ENCODE measurements at regions of chrX and their contacts with region 1.

Region 1: GRCh38 chrX:13487731-13488523 is 81.5 kb upstream of the EGFL6 start:
- DNase-seq: peak; percentile 81
- H3K4me3 ChIP-seq: no peak overlapping the region
- H3K27ac ChIP-seq: peak overlapping the region; percentile 90
- H3K4me1 ChIP-seq: peaks cover 13% of the 10 kb centered on the region
- H3K27me3 ChIP-seq: no peaks in the 10 kb centered on the region
- CTCF ChIP-seq: peak in 1 of 2 donors; percentile 15
- POLR2A ChIP-seq: peak; percentile 15

Region 2: DNA sequence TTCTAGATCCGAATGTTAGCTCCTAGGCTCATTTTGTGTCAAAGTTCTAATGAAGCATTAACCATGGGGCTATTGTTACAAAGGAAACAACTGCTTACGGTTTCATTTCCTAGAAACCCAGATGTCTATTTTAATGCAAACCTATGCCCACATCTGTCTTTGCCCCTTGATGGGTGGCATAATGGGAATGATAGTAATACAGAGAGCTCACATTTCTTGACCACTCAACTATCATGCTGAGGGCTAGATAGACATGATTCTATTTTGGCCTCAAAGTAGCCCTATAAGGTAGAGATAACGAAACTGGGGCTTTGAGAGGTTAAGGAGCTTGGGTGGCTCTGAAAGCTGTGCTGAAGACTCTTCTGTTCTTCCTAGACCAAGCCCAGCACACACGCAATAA is 619.2 kb before region 1 on chrX:
- CTCF ChIA-PET with region 1: no interaction called
- POLR2A ChIA-PET with region 1: no interaction called
- dilution Hi-C with region 1: no loop called
- intact Hi-C with region 1: no loop called
- DNase-seq: no peak
- H3K4me3 ChIP-seq: no peak overlapping the region
- H3K27ac ChIP-seq: no peak overlapping the region
- H3K4me1 ChIP-seq: no peaks in the 10 kb centered on the region
- H3K27me3 ChIP-seq: peaks cover 0 to 6% of the 10 kb centered on the region in 2 experiments
- CTCF ChIP-seq: no peak
- POLR2A ChIP-seq: no peak

Region 3: GRCh38 chrX:12946838-12947544 is 540.9 kb before region 1 on chrX:
- CTCF ChIA-PET with region 1: interaction called, 38 read pairs
- POLR2A ChIA-PET with region 1: interaction called, 4 read pairs
- dilution Hi-C with region 1: no loop called
- intact Hi-C with region 1: loop called (anchors 1 kb)
- DNase-seq: peak; percentile 90
- H3K4me3 ChIP-seq: no peak overlapping the region
- H3K27ac ChIP-seq: peak overlapping the region; percentile 64
- H3K4me1 ChIP-seq: peaks cover 27% of the 10 kb centered on the region
- H3K27me3 ChIP-seq: no peaks in the 10 kb centered on the region
- CTCF ChIP-seq: peak; percentile 85 to 87
- POLR2A ChIP-seq: no peak

Region 4: DNA sequence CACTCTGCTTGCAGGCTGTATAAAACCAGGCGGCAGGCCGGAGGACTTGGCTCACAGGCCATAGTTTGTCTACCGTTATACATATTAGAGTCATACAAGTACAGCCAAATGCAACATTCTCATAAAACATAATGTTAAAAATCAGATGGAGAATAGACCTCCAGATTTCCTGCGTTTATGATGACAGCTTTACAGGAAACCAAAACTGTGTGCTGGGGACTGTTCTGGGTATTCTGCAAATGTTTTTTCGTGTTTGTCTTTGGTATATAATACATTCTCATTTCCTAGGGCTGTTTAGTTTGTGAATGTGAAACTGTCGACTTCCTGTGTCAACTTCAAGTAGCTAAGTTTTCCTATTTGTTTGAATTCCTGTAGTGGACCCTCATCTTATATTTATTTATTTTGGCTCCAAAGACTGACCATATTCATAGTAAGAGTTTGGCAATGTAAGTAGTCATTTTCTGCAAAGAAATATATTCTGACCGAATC is 364.0 kb before region 1 on chrX:
- CTCF ChIA-PET with region 1: interaction called, 8 read pairs
- POLR2A ChIA-PET with region 1: no interaction called
- dilution Hi-C with region 1: no loop called
- intact Hi-C with region 1: loop called (anchors 1 kb)
- DNase-seq: peak; percentile 93
- H3K4me3 ChIP-seq: no peak overlapping the region
- H3K27ac ChIP-seq: peak overlapping the region; percentile 91
- H3K4me1 ChIP-seq: peaks cover 59% of the 10 kb centered on the region
- H3K27me3 ChIP-seq: no peaks in the 10 kb centered on the region
- CTCF ChIP-seq: no peak
- POLR2A ChIP-seq: peak; percentile 45

Region 5: GRCh38 chrX:13212191-13212651 is 275.7 kb before region 1 on chrX:
- CTCF ChIA-PET with region 1: no interaction called
- POLR2A ChIA-PET with region 1: no interaction called
- dilution Hi-C with region 1: no loop called
- intact Hi-C with region 1: loop called (anchors 1 kb)
- DNase-seq: peak; percentile 82
- H3K4me3 ChIP-seq: no peak overlapping the region
- H3K27ac ChIP-seq: peak overlapping the region; percentile 63
- H3K4me1 ChIP-seq: peaks cover 24% of the 10 kb centered on the region
- H3K27me3 ChIP-seq: no peaks in the 10 kb centered on the region
- CTCF ChIP-seq: no peak
- POLR2A ChIP-seq: no peak

Region 6: GRCh38 chrX:13304052-13304451 is 183.9 kb before region 1 on chrX:
- CTCF ChIA-PET with region 1: no interaction called
- POLR2A ChIA-PET with region 1: interaction called, 3 read pairs
- dilution Hi-C with region 1: no loop called
- intact Hi-C with region 1: loop called (anchors 5 kb)
- DNase-seq: no peak
- H3K4me3 ChIP-seq: no peak overlapping the region
- H3K27ac ChIP-seq: peak overlapping the region; percentile 40
- H3K4me1 ChIP-seq: peaks cover 4% of the 10 kb centered on the region
- H3K27me3 ChIP-seq: no peaks in the 10 kb centered on the region
- CTCF ChIP-seq: no peak
- POLR2A ChIP-seq: no peak

Region 7: GRCh38 chrX:13357925-13358324 is 130.0 kb before region 1 on chrX:
- CTCF ChIA-PET with region 1: no interaction called
- POLR2A ChIA-PET with region 1: no interaction called
- dilution Hi-C with region 1: no loop called
- intact Hi-C with region 1: loop called (anchors 1 kb)
- DNase-seq: peak; percentile 46
- H3K4me3 ChIP-seq: no peak overlapping the region
- H3K27ac ChIP-seq: peak overlapping the region; percentile 50
- H3K4me1 ChIP-seq: peaks cover 4% of the 10 kb centered on the region
- H3K27me3 ChIP-seq: no peaks in the 10 kb centered on the region
- CTCF ChIP-seq: no peak
- POLR2A ChIP-seq: no peak

Region 8: GRCh38 chrX:13428055-13428786 is 59.7 kb before region 1 on chrX:
- CTCF ChIA-PET with region 1: interaction called, 5 read pairs
- POLR2A ChIA-PET with region 1: no interaction called
- dilution Hi-C with region 1: no loop called
- intact Hi-C with region 1: loop called (anchors 2 kb)
- DNase-seq: peak; percentile 76
- H3K4me3 ChIP-seq: no peak overlapping the region
- H3K27ac ChIP-seq: peak overlapping the region; percentile 68
- H3K4me1 ChIP-seq: peaks cover 30% of the 10 kb centered on the region
- H3K27me3 ChIP-seq: no peaks in the 10 kb centered on the region
- CTCF ChIP-seq: no peak
- POLR2A ChIP-seq: no peak

Measured in endothelial cell of umbilical vein (primary cell).